CD4-positive, alpha-beta T cell (primary cell): ENCODE measurements at regions of chr3 and their contacts with region 1.

Region 1: DNA sequence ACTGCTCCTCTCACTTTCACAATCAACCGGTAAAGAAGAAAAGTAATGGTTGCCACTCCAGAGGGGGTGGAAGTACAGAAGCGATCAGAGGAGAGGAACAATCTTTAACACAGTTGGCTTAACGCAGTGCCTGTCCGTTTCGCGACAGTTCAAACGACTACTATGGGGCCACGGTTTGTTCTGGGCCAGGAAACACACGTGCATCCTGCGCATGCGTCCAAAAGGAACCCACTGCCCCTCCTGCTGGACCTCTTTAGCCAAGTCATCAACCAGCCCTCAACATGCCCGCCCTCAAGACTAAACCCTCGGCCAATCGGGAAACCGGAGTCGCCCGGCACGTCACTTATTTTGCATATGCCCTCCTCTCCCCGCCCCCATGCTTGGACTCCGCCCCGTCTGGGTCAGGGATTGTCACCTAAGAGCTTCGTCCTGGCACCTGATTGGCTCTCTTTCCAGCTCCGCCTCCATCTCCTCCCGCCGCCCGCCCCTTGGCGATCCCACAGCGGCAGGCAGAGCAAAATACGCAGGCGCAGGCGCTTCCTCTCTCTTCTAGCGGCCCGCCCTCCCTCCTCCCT is 345 bp upstream of the CDV3 start:
- DNase-seq: peak; percentile 99 to 100 (median 100)
- ATAC-seq: peak; percentile 84
- H3K4me3 ChIP-seq: peak overlapping the region; percentile 79
- H3K4me3 Mint-ChIP-seq: peak overlapping the region; percentile 89
- H3K27ac ChIP-seq: peak overlapping the region; percentile 88 to 98
- H3K27ac Mint-ChIP-seq: peak overlapping the region; percentile 99
- H3K4me1 ChIP-seq: peaks cover 39% of the 10 kb centered on the region
- H3K4me1 Mint-ChIP-seq: peaks cover 64% of the 10 kb centered on the region
- H3K27me3 ChIP-seq: no peaks in the 10 kb centered on the region
- H3K27me3 Mint-ChIP-seq: no peaks in the 10 kb centered on the region
- CTCF ChIP-seq: no peak

Region 2: GRCh38 chr3:132722164-132723024 is 850.7 kb before region 1 on chr3 and contains the start of gene NPHP3:
- CTCF ChIA-PET with region 1: no interaction called
- POLR2A ChIA-PET with region 1: interaction called, 17 read pairs
- intact Hi-C with region 1: loop called (anchors 1 to 5 kb)
- DNase-seq: peak; percentile 90 to 100 (median 98)
- ATAC-seq: peak; percentile 77
- H3K4me3 ChIP-seq: peak within 1 kb of the TSS; percentile 89
- H3K4me3 Mint-ChIP-seq: peak within 1 kb of the TSS; percentile 96
- H3K27ac ChIP-seq: peak within 1 kb of the TSS; percentile 43 to 46
- H3K27ac Mint-ChIP-seq: peak within 1 kb of the TSS; percentile 93
- H3K4me1 ChIP-seq: peaks cover 25% of the 10 kb centered on the region
- H3K4me1 Mint-ChIP-seq: peaks cover 50% of the 10 kb centered on the region
- H3K27me3 ChIP-seq: no peaks in the 10 kb centered on the region
- H3K27me3 Mint-ChIP-seq: no peaks in the 10 kb centered on the region
- CTCF ChIP-seq: no peak
- total RNA-seq, gene NPHP3: 25.5 to 27.4 TPM

Region 3: GRCh38 chr3:132964266-132964665 is 608.9 kb before region 1 on chr3:
- CTCF ChIA-PET with region 1: no interaction called
- POLR2A ChIA-PET with region 1: no interaction called
- intact Hi-C with region 1: no loop called
- DNase-seq: no peak
- ATAC-seq: no peak
- H3K4me3 ChIP-seq: no peak overlapping the region
- H3K4me3 Mint-ChIP-seq: no peak overlapping the region
- H3K27ac ChIP-seq: no peak overlapping the region
- H3K27ac Mint-ChIP-seq: no peak overlapping the region
- H3K4me1 ChIP-seq: no peaks in the 10 kb centered on the region
- H3K4me1 Mint-ChIP-seq: no peaks in the 10 kb centered on the region
- H3K27me3 ChIP-seq: no peaks in the 10 kb centered on the region
- H3K27me3 Mint-ChIP-seq: no peaks in the 10 kb centered on the region
- CTCF ChIP-seq: no peak

Region 4: GRCh38 chr3:133448478-133449122 is 124.5 kb before region 1 on chr3:
- CTCF ChIA-PET with region 1: no interaction called
- POLR2A ChIA-PET with region 1: interaction called, 13 read pairs
- intact Hi-C with region 1: loop called in 1 of 2 experiments (anchors 5 kb)
- DNase-seq: peak in 5 of 14 experiments; percentile 2 to 60 (median 48)
- ATAC-seq: peak; percentile 76
- H3K4me3 ChIP-seq: no peak overlapping the region
- H3K4me3 Mint-ChIP-seq: peak overlapping the region; percentile 13
- H3K27ac ChIP-seq: peak overlapping the region in 1 of 2 donors; percentile 62
- H3K27ac Mint-ChIP-seq: peak overlapping the region; percentile 75
- H3K4me1 ChIP-seq: peaks cover 23% of the 10 kb centered on the region
- H3K4me1 Mint-ChIP-seq: peaks cover 25% of the 10 kb centered on the region
- H3K27me3 ChIP-seq: no peaks in the 10 kb centered on the region
- H3K27me3 Mint-ChIP-seq: no peaks in the 10 kb centered on the region
- CTCF ChIP-seq: no peak

Region 5: GRCh38 chr3:133506215-133506901 is 66.8 kb before region 1 on chr3:
- CTCF ChIA-PET with region 1: no interaction called
- POLR2A ChIA-PET with region 1: interaction called, 55 read pairs
- intact Hi-C with region 1: loop called in 1 of 2 experiments (anchors 5 kb)
- DNase-seq: peak in 8 of 14 experiments; percentile 9 to 79 (median 28)
- ATAC-seq: peak; percentile 96
- H3K4me3 ChIP-seq: peak overlapping the region; percentile 43
- H3K4me3 Mint-ChIP-seq: peak overlapping the region; percentile 80
- H3K27ac ChIP-seq: peak overlapping the region in 1 of 2 donors; percentile 77
- H3K27ac Mint-ChIP-seq: peak overlapping the region; percentile 84
- H3K4me1 ChIP-seq: peaks cover 7% of the 10 kb centered on the region
- H3K4me1 Mint-ChIP-seq: peaks cover 17% of the 10 kb centered on the region
- H3K27me3 ChIP-seq: no peaks in the 10 kb centered on the region
- H3K27me3 Mint-ChIP-seq: no peaks in the 10 kb centered on the region
- CTCF ChIP-seq: no peak

Region 6: GRCh38 chr3:133805527-133806475 is 232.7 kb after region 1 on chr3 and contains the start of gene SRPRB:
- CTCF ChIA-PET with region 1: no interaction called
- POLR2A ChIA-PET with region 1: interaction called, 7 read pairs
- intact Hi-C with region 1: loop called in 1 of 2 experiments (anchors 2 kb)
- DNase-seq: peak; percentile 90 to 99 (median 94)
- ATAC-seq: peak; percentile 95
- H3K4me3 ChIP-seq: peak within 1 kb of the TSS; percentile 92
- H3K4me3 Mint-ChIP-seq: peak within 1 kb of the TSS; percentile 97
- H3K27ac ChIP-seq: peak within 1 kb of the TSS; percentile 70 to 75
- H3K27ac Mint-ChIP-seq: peak within 1 kb of the TSS; percentile 94
- H3K4me1 ChIP-seq: peaks cover 16% of the 10 kb centered on the region
- H3K4me1 Mint-ChIP-seq: peaks cover 40% of the 10 kb centered on the region
- H3K27me3 ChIP-seq: no peaks in the 10 kb centered on the region
- H3K27me3 Mint-ChIP-seq: no peaks in the 10 kb centered on the region
- CTCF ChIP-seq: no peak
- total RNA-seq, gene SRPRB: 19.1 to 19.9 TPM